Panc1 (cell line): ENCODE measurements at regions of chr9 and their contacts with region 1.

Region 1: DNA sequence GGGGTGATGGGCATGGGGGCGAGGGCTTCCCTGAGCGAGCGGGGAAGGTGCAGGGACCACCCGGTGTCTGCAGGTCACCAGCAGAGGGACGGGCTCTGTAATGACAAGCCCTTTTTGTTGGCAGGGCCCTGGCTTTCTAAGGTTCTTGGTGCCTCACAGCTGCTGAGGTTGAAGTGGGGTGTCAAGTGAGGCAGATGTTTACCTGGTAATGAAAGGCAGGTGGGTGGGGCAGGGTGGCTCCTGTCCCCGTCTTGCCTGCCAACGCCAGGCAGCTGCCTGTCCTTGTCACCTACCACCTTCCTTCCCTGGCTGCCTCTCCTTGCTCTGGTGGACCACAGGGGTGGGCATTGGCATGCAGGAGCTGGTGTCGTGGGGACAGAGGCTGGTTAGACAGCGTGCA is 41.0 kb upstream of the SEMA4D start:
- DNase-seq: no peak
- ATAC-seq: no peak
- H3K4me3 ChIP-seq: no peak overlapping the region
- H3K27ac ChIP-seq: no peak overlapping the region
- H3K4me1 ChIP-seq: no peaks in the 10 kb centered on the region
- H3K27me3 ChIP-seq: no peaks in the 10 kb centered on the region
- CTCF ChIP-seq: no peak

Region 2: GRCh38 chr9:89497978-89498851 is 40.7 kb before region 1 on chr9 and contains the start of gene SEMA4D:
- CTCF ChIA-PET with region 1: no interaction called
- POLR2A ChIA-PET with region 1: no interaction called
- in situ Hi-C with region 1: no loop called
- intact Hi-C with region 1: loop called (anchors 1 kb)
- DNase-seq: no peak
- ATAC-seq: peak; percentile 83
- H3K4me3 ChIP-seq: peak within 1 kb of the TSS; percentile 37 to 47; a peak in 3 of 4 replicates
- H3K27ac ChIP-seq: no peak within 1 kb of the TSS
- H3K4me1 ChIP-seq: no peaks in the 10 kb centered on the region
- H3K27me3 ChIP-seq: no peaks in the 10 kb centered on the region
- CTCF ChIP-seq: no peak
- total RNA-seq, gene SEMA4D: 6.5 TPM

Region 3: GRCh38 chr9:90112788-90113187 is 573.9 kb after region 1 on chr9:
- CTCF ChIA-PET with region 1: no interaction called
- POLR2A ChIA-PET with region 1: no interaction called
- in situ Hi-C with region 1: no loop called
- intact Hi-C with region 1: no loop called
- DNase-seq: no peak
- ATAC-seq: no peak
- H3K4me3 ChIP-seq: no peak overlapping the region
- H3K27ac ChIP-seq: no peak overlapping the region
- H3K4me1 ChIP-seq: no peaks in the 10 kb centered on the region
- H3K27me3 ChIP-seq: no peaks in the 10 kb centered on the region
- CTCF ChIP-seq: no peak